ENCODE measurements at regions of chr16 and their contacts with region 1.

Region 1: GRCh38 chr16:85162478-85163277 is 50.4 kb upstream of the CIBAR2 start:
- DNase-seq: peak in 6 of 7 donors; percentile 74 to 84 (median 77)
- H3K4me3 ChIP-seq: no peak overlapping the region
- H3K27ac ChIP-seq: peak overlapping the region in 3 of 5 donors; percentile 66 to 88 (median 84)
- H3K4me1 ChIP-seq: peaks cover 0 to 39% of the 10 kb centered on the region in 2 donors
- H3K27me3 ChIP-seq: no peaks in the 10 kb centered on the region
- CTCF ChIP-seq: peak in 1 of 6 experiments; percentile 10
- POLR2A ChIP-seq: peak in 1 of 2 donors; percentile 25

Region 2: DNA sequence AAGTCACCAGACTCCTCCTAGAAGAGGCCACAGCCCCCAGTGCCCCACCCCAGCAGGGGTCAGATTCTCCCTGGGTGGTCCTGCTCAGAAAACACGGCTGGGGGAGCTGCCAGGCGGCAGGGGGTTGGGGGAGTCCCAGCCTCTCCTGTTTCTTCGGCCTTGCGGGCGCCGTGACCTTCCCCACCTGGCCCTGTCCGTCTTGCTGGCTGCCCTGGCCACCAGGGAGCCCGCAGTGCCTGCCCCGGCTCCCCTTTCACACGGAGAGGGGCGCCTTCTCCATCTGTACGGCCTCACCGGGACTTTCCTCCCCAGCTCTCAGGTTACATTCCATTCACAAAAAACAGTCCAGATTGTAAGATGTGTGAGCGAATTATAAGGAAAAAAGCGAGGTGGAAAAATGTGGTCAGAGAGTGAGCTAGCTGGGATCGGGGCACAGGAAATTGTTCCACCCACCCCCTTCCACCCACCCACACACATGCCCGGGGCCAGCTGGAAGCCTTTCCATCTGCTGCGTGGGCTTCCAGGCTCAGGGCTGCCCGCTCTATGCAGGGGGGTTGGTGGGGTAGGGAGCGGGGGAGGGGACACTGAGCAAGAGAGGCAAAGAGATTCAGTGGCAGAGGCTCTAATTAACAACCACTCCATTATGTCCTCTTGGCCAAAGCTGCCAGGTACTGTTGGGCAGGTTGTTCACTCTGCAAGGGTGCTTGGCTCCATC is 35.8 kb before region 1 on chr16:
- intact Hi-C with region 1: loop called in 1 of 2 experiments (anchors 5 kb)
- DNase-seq: peak in 2 of 7 donors; percentile 42 to 50
- H3K4me3 ChIP-seq: no peak overlapping the region
- H3K27ac ChIP-seq: peak overlapping the region in 2 of 5 donors; percentile 60 to 84
- H3K4me1 ChIP-seq: peaks cover 13 to 37% of the 10 kb centered on the region in 2 donors
- H3K27me3 ChIP-seq: no peaks in the 10 kb centered on the region
- CTCF ChIP-seq: no peak
- POLR2A ChIP-seq: no peak

Region 3: DNA sequence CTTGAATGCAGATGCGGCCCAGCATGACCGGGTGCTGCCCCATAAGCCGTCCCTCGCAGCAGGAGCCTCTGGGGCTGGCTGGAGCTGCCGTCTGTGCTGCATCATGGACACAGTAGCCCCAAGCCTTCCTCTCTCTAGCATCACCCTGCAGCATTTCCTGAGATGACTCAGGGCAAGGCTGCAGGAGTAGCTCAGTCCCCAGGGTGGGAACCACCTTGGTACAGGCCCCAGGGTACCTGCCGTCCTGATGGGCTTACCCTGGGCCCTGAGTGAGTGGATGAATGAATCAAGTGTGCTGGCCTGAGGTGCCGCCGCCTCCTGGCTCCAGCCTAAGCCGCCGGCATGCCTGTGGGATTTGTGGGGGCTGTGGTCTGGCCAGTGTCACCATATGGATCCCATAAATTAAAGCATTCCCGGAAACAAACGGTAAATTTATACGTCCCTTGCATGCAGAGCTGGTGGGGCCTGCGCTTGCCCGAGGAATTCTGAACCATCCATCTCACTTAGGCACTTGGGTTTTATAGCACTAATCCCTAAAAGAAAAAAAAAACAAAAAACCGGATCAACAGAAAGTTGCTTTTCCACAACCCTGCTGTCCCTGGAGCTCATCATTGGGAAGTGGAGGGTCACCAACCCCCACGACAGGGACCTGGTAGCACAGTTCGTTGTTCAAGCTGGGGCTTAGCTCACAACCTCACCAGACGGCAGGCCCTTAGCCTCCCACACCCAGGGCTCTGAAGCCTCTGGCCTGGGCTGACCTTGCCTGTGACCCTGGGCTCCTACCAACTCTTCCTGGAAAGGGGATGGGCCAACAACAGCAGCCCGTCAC is 192.2 kb after region 1 on chr16:
- intact Hi-C with region 1: no loop called
- DNase-seq: peak; percentile 71 to 92 (median 85)
- H3K4me3 ChIP-seq: no peak overlapping the region
- H3K27ac ChIP-seq: peak overlapping the region; percentile 21 to 85 (median 81)
- H3K4me1 ChIP-seq: peaks cover 31 to 48% of the 10 kb centered on the region in 2 donors
- H3K27me3 ChIP-seq: no peaks in the 10 kb centered on the region
- CTCF ChIP-seq: no peak
- POLR2A ChIP-seq: peak in 1 of 2 donors; percentile 19

Measured in adrenal gland (tissue), 19 donors.